ENCODE measurements at regions of chr9 and their contacts with region 1.

Region 1: DNA sequence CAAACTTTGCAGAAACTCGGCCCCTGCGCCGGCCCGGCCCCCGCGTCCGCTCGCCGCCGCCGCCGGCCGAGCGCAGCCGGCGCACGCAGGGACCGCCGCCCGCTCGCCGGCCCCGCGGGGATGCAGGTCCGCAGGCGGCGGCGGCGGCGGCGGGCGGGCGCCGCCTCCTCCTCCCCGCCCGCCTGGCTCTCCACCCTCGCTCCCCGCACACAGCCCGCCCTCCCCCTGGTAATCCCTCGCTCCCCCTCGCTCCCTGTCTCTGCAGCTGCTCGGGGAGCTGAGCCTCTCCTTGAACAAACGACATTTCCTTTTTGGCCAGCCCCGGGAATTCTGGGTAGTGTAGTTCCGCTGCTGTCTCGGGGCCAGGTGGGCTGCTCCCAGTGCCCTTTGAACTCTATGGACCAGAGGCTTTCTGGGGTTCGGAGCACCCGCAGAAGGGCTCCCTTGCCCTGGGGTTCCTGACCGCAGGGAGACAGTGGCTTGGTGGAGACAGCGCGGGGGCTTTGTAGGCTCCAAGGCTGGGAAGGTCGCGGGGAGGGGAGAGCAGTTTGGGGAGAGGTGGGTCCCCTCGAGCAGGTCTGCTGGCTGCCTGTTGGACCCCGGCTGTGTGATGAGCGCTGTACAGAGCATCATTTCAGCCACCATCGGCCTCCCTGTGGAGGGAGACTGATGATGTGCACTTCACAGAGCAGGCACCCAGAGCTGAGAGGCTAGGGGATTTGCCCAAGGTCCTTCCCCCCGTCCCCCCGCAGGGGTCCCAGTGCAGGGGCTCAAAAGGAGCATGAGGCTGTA is 1.8 kb upstream of the FAM78A start:
- DNase-seq: peak; percentile 82
- ATAC-seq: peak; percentile 58
- H3K4me3 ChIP-seq: peak overlapping the region in 4 of 5 experiments; percentile 11 to 95 (median 78)
- H3K4me3 Mint-ChIP-seq: peak overlapping the region; percentile 85
- H3K27ac ChIP-seq: peak overlapping the region; percentile 28 to 71
- H3K27ac Mint-ChIP-seq: peak overlapping the region; percentile 87
- H3K4me1 ChIP-seq: peaks cover 33 to 36% of the 10 kb centered on the region in 2 donors
- H3K4me1 Mint-ChIP-seq: peaks cover 40% of the 10 kb centered on the region
- H3K27me3 ChIP-seq: peaks cover 0 to 16% (median 5%) of the 10 kb centered on the region in 4 experiments
- H3K27me3 Mint-ChIP-seq: peaks cover 10% of the 10 kb centered on the region
- CTCF ChIP-seq: no peak

Region 2: DNA sequence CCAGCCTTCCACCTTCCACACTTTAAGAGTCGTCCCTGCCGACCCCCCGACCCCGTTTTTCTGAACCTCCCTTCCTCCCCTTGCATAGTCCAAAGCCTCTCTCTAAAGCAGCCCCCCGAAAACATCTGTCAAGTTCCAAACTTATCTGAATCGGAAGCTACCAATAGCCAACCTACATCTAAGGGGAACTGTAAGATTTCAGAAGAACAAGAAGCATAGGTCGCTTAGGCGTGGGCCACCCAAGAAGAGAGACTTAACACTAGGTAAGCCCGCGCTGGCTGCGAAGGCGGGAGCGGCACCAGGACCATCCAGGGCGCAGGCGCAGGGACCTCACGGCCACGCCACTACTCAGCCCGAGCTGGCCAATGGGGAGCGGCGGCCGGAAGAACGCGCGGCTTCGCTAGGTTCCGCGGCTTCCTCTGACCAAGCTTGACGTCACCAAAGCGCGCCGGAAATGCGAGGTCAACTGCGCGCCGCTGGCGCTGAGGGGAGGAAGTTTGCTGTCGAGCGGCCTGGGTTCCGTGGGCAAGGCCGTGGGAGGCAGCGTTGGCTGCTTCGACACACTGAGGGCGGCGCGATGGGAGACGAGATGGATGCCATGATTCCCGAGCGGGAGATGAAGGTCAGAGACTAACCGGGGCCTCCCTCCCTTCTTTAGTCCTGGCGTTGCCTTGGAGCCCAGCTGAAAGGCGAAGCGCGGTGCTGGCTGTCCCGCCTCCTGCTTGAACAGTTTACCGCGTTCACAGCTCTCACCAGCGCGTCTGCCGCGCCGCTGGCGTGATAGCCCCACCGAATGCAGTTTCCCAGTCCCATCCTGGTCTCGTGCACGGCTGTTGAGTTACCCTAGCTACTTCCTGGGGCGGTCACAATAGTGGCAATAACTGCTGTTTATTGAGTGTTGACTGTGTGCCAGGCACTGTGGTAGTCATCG is 152.7 kb before region 1 on chr9 and contains the start of gene NUP214:
- CTCF ChIA-PET with region 1: no interaction called
- POLR2A ChIA-PET with region 1: no interaction called
- intact Hi-C with region 1: loop called (anchors 1 kb)
- DNase-seq: peak; percentile 99
- ATAC-seq: peak; percentile 99
- H3K4me3 ChIP-seq: peak within 1 kb of the TSS; percentile 76 to 89 (median 86)
- H3K4me3 Mint-ChIP-seq: peak within 1 kb of the TSS; percentile 99
- H3K27ac ChIP-seq: peak within 1 kb of the TSS; percentile 73 to 88
- H3K27ac Mint-ChIP-seq: peak within 1 kb of the TSS; percentile 100
- H3K4me1 ChIP-seq: peaks cover 14 to 17% of the 10 kb centered on the region in 2 donors
- H3K4me1 Mint-ChIP-seq: peaks cover 27% of the 10 kb centered on the region
- H3K27me3 ChIP-seq: no peaks in the 10 kb centered on the region
- H3K27me3 Mint-ChIP-seq: peaks cover 3% of the 10 kb centered on the region
- CTCF ChIP-seq: no peak
- total RNA-seq, gene NUP214: 94.6 and 103 TPM in 2 replicates

Region 3: DNA sequence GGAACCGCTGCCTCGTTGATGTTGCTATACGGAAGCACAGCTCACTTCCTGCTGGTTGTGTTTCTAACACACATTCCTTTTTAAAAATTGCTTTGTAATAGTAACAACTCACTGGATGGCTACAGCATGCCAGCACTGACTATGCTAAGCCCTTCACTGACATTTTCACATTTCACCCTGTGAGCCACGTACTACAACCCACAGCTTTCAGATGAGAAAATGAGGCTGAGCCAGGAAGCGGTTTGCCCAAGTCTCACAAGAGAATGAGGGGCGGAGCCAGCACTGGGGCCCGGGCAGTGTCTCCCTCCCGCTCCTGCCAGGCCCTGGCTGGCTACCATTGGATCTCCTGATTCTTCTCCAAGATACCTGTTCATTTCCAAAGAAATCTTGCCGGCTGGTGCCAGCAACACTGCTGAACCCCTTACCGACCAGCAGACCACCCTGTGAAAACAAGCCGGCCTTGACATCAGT is 40.1 kb before region 1 on chr9:
- CTCF ChIA-PET with region 1: interaction called, 4 read pairs
- POLR2A ChIA-PET with region 1: interaction called, 7 read pairs
- intact Hi-C with region 1: loop called (anchors 1 kb)
- DNase-seq: peak; percentile 79
- ATAC-seq: peak; percentile 95
- H3K4me3 ChIP-seq: peak overlapping the region; percentile 27 to 65 (median 46)
- H3K4me3 Mint-ChIP-seq: peak overlapping the region; percentile 92
- H3K27ac ChIP-seq: peak overlapping the region; percentile 63 to 69
- H3K27ac Mint-ChIP-seq: peak overlapping the region; percentile 97
- H3K4me1 ChIP-seq: peaks cover 19 to 27% of the 10 kb centered on the region in 2 donors
- H3K4me1 Mint-ChIP-seq: peaks cover 20% of the 10 kb centered on the region
- H3K27me3 ChIP-seq: no peaks in the 10 kb centered on the region
- H3K27me3 Mint-ChIP-seq: no peaks in the 10 kb centered on the region
- CTCF ChIP-seq: no peak

Region 4: GRCh38 chr9:131253891-131254491 is 24.1 kb before region 1 on chr9:
- CTCF ChIA-PET with region 1: interaction called, 158 read pairs
- POLR2A ChIA-PET with region 1: interaction called, 199 read pairs
- intact Hi-C with region 1: loop called (anchors 1 kb)
- DNase-seq: peak; percentile 63
- ATAC-seq: peak; percentile 22
- H3K4me3 ChIP-seq: no peak overlapping the region
- H3K4me3 Mint-ChIP-seq: peak overlapping the region; percentile 81
- H3K27ac ChIP-seq: peak overlapping the region; percentile 68 to 95
- H3K27ac Mint-ChIP-seq: peak overlapping the region; percentile 96
- H3K4me1 ChIP-seq: peaks cover 50 to 61% of the 10 kb centered on the region in 2 donors
- H3K4me1 Mint-ChIP-seq: peaks cover 35% of the 10 kb centered on the region
- H3K27me3 ChIP-seq: no peaks in the 10 kb centered on the region
- H3K27me3 Mint-ChIP-seq: no peaks in the 10 kb centered on the region
- CTCF ChIP-seq: no peak

Region 5: GRCh38 chr9:131262327-131263032 is 15.6 kb before region 1 on chr9:
- CTCF ChIA-PET with region 1: interaction called, 158 read pairs
- POLR2A ChIA-PET with region 1: interaction called, 199 read pairs
- intact Hi-C with region 1: no loop called
- DNase-seq: peak; percentile 77
- ATAC-seq: peak; percentile 81
- H3K4me3 ChIP-seq: peak overlapping the region in 1 of 5 experiments; percentile 9
- H3K4me3 Mint-ChIP-seq: peak overlapping the region; percentile 35
- H3K27ac ChIP-seq: peak overlapping the region; percentile 57 to 80
- H3K27ac Mint-ChIP-seq: peak overlapping the region; percentile 94
- H3K4me1 ChIP-seq: peaks cover 54 to 58% of the 10 kb centered on the region in 2 donors
- H3K4me1 Mint-ChIP-seq: peaks cover 48% of the 10 kb centered on the region
- H3K27me3 ChIP-seq: no peaks in the 10 kb centered on the region
- H3K27me3 Mint-ChIP-seq: no peaks in the 10 kb centered on the region
- CTCF ChIP-seq: no peak

Region 6: GRCh38 chr9:131310833-131311554 is 32.9 kb after region 1 on chr9:
- CTCF ChIA-PET with region 1: no interaction called
- POLR2A ChIA-PET with region 1: no interaction called
- intact Hi-C with region 1: no loop called
- DNase-seq: peak; percentile 45
- ATAC-seq: peak; percentile 36
- H3K4me3 ChIP-seq: no peak overlapping the region
- H3K4me3 Mint-ChIP-seq: peak overlapping the region; percentile 41
- H3K27ac ChIP-seq: no peak overlapping the region
- H3K27ac Mint-ChIP-seq: no peak overlapping the region
- H3K4me1 ChIP-seq: peaks cover 5 to 7% of the 10 kb centered on the region in 2 donors
- H3K4me1 Mint-ChIP-seq: peaks cover 8% of the 10 kb centered on the region
- H3K27me3 ChIP-seq: peaks cover 0 to 6% (median 0%) of the 10 kb centered on the region in 4 experiments
- H3K27me3 Mint-ChIP-seq: peaks cover 8% of the 10 kb centered on the region
- CTCF ChIP-seq: no peak

Measured in B cell (primary cell).